SK-N-SH (cell line): ENCODE measurements at regions of chr17 and their contacts with region 1.

Region 1: GRCh38 chr17:45894022-45894784 is at the start of gene MAPT:
- DNase-seq: peak; percentile 100
- H3K4me3 ChIP-seq: peak within 1 kb of the TSS; percentile 77 to 92
- H3K27ac ChIP-seq: peak within 1 kb of the TSS in 1 of 2 experiments; percentile 71; a peak in 1 of 4 replicates
- H3K4me1 ChIP-seq: peaks cover 0 to 19% of the 10 kb centered on the region in 2 experiments; a peak in 1 of 4 replicates
- H3K27me3 ChIP-seq: peaks cover 42% of the 10 kb centered on the region
- CTCF ChIP-seq: peak; percentile 83
- EP300 ChIP-seq: no peak; a peak in 1 of 4 replicates
- RAD21 ChIP-seq: peak; percentile 51
- polyA plus RNA-seq, gene MAPT: 0.47 and 0.74 TPM in 2 replicates

Region 2: DNA sequence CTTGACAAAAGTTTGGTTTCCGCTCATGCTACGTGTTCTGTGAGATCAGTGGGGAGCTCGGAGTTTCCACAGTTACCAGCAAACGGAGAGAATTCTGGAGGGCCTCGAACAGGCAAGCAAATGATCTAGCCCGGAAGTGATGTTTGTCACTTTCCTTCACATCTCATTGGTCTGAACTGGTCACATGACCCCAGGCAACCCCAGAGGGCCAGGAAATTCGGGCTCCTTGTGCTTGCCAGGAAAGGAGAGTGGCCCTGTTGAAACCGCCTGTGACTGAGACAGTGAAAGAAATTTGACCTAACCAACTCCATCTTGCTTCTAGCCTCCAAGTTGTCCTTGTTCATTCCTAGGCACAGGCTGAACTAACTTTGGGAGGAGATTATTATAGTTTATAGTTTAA is 26.5 kb before region 1 on chr17:
- CTCF ChIA-PET with region 1: interaction called, 21 read pairs
- POLR2A ChIA-PET with region 1: no interaction called
- DNase-seq: no peak
- H3K4me3 ChIP-seq: no peak overlapping the region
- H3K27ac ChIP-seq: no peak overlapping the region
- H3K4me1 ChIP-seq: no peaks in the 10 kb centered on the region
- H3K27me3 ChIP-seq: peaks cover 51% of the 10 kb centered on the region
- CTCF ChIP-seq: no peak
- EP300 ChIP-seq: no peak
- RAD21 ChIP-seq: no peak

Region 3: DNA sequence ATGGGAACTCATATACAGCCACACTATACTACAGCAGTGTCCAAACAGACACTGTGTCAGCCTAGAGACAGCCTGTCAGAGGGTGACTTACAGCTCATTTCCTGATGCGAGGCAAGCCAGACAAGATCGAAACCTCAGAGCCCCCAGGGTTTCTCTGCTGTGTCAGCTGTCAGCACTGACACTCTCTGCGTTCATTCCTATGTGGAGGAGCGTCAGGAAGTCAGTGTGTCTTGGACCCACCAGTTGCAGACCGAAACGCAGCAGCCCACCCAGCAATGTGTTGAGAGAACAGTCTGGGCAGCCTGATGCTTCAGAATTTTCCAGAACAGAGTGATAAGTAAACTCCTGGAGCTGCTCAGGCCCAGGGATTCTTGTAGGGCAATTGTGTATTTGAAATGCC is 20.5 kb before region 1 on chr17:
- CTCF ChIA-PET with region 1: interaction called, 21 read pairs
- POLR2A ChIA-PET with region 1: no interaction called
- DNase-seq: peak; percentile 63
- H3K4me3 ChIP-seq: no peak overlapping the region
- H3K27ac ChIP-seq: no peak overlapping the region
- H3K4me1 ChIP-seq: peaks cover 0 to 6% of the 10 kb centered on the region in 2 experiments; a peak in 2 of 4 replicates
- H3K27me3 ChIP-seq: peaks cover 51% of the 10 kb centered on the region
- CTCF ChIP-seq: no peak
- EP300 ChIP-seq: 0 out of 4 replicates have a peak, but pooled peaks of 1 of the 2 experiments have one; percentile 18
- RAD21 ChIP-seq: no peak

Region 4: GRCh38 chr17:45883063-45883462 is 11.1 kb before region 1 on chr17:
- CTCF ChIA-PET with region 1: interaction called, 34 read pairs
- POLR2A ChIA-PET with region 1: interaction called, 6 read pairs
- DNase-seq: no peak
- H3K4me3 ChIP-seq: no peak overlapping the region
- H3K27ac ChIP-seq: no peak overlapping the region
- H3K4me1 ChIP-seq: no peaks in the 10 kb centered on the region
- H3K27me3 ChIP-seq: peaks cover 12% of the 10 kb centered on the region; the same call in 1 of the 2 replicates
- CTCF ChIP-seq: no peak
- EP300 ChIP-seq: no peak
- RAD21 ChIP-seq: no peak

Region 5: GRCh38 chr17:45907750-45908395 is 13.7 kb after region 1 on chr17:
- CTCF ChIA-PET with region 1: interaction called, 31 read pairs
- POLR2A ChIA-PET with region 1: no interaction called
- DNase-seq: no peak
- H3K4me3 ChIP-seq: no peak overlapping the region
- H3K27ac ChIP-seq: no peak overlapping the region
- H3K4me1 ChIP-seq: peaks cover 0 to 41% of the 10 kb centered on the region in 2 experiments; a peak in 2 of 4 replicates
- H3K27me3 ChIP-seq: peaks cover 28% of the 10 kb centered on the region
- CTCF ChIP-seq: no peak
- EP300 ChIP-seq: no peak
- RAD21 ChIP-seq: no peak

Region 6: DNA sequence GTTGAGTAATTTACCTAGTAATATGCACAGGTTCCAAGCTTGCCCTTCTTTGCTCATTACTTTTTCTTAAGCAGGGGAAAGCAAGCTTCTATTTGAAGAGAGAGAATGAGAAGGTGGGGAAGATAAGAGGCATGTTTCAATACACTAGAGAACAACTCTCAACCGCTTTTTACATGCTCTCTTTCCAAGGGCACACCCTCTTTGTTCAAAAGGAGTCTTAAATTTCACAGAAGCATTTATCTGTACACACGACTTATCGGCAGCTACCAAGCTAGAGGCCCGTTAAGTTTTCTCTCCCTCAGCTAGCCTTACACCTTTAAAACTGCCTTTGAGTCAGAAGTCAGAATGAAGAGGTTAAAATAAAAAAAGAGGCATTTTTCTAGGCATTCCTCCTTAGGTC is 184.5 kb after region 1 on chr17:
- CTCF ChIA-PET with region 1: no interaction called
- POLR2A ChIA-PET with region 1: no interaction called
- DNase-seq: no peak
- H3K4me3 ChIP-seq: no peak overlapping the region
- H3K27ac ChIP-seq: no peak overlapping the region
- H3K4me1 ChIP-seq: peaks cover 3 to 8% of the 10 kb centered on the region in 2 experiments; a peak in 3 of 4 replicates
- H3K27me3 ChIP-seq: no peaks in the 10 kb centered on the region
- CTCF ChIP-seq: no peak
- EP300 ChIP-seq: no peak
- RAD21 ChIP-seq: no peak